ENCODE measurements at regions of chr13 and their contacts with region 1.

Region 1: DNA sequence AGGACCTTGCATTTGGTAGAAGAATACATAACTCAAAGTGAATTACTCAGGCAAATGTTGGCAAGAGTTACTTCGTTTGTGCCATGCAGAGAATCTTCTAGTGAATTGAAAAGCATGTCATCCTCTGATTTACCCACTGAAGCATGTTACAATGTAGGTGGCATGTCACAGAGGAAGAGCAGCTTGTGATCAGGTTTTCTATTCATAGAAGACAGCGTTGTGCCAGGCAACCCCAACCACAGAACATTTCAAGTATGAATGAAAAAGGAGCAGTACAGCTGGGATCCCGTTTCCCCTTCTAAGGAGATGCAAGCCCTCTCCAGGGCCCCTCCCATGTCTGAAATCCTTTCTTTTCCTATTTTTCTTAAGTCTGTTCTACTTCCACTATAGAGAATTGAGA is 6.0 kb upstream of the KATNAL1 start:
- DNase-seq: no peak
- ATAC-seq: no peak
- H3K4me3 ChIP-seq: no peak overlapping the region
- H3K4me3 Mint-ChIP-seq: no peak overlapping the region
- H3K27ac ChIP-seq: no peak overlapping the region
- H3K27ac Mint-ChIP-seq: no peak overlapping the region
- H3K4me1 ChIP-seq: no peaks in the 10 kb centered on the region
- H3K4me1 Mint-ChIP-seq: peaks cover 30% of the 10 kb centered on the region
- H3K27me3 ChIP-seq: no peaks in the 10 kb centered on the region
- H3K27me3 Mint-ChIP-seq: no peaks in the 10 kb centered on the region
- CTCF ChIP-seq: no peak

Region 2: GRCh38 chr13:30292325-30292724 is 21.0 kb before region 1 on chr13:
- CTCF ChIA-PET with region 1: no interaction called
- POLR2A ChIA-PET with region 1: no interaction called
- intact Hi-C with region 1: no loop called
- DNase-seq: no peak
- ATAC-seq: no peak
- H3K4me3 ChIP-seq: no peak overlapping the region
- H3K4me3 Mint-ChIP-seq: no peak overlapping the region
- H3K27ac ChIP-seq: no peak overlapping the region
- H3K27ac Mint-ChIP-seq: no peak overlapping the region
- H3K4me1 ChIP-seq: no peaks in the 10 kb centered on the region
- H3K4me1 Mint-ChIP-seq: peaks cover 6% of the 10 kb centered on the region
- H3K27me3 ChIP-seq: no peaks in the 10 kb centered on the region
- H3K27me3 Mint-ChIP-seq: no peaks in the 10 kb centered on the region
- CTCF ChIP-seq: no peak

Region 3: DNA sequence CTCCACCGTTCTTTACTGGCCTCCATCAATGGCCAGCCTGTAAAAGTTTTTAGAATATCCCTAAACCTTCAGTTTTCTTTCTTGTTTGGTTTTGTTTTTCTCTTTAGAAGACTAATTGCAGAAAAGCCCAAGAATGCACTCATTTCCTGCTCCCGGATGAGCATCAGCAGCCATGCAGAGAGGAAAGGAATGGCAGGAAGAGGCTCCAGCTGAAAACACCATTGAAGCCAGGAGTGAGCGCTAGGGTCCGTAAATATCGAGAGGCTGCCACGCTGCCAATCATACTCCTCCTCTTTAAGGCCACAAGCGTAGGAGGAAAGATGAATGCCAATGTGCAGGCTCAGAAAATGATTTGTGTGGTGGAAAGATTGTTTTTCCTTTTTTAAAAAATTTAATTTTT is 51.6 kb after region 1 on chr13:
- CTCF ChIA-PET with region 1: no interaction called
- POLR2A ChIA-PET with region 1: no interaction called
- intact Hi-C with region 1: loop called in 1 of 2 experiments (anchors 5 kb)
- DNase-seq: no peak
- ATAC-seq: no peak
- H3K4me3 ChIP-seq: no peak overlapping the region
- H3K4me3 Mint-ChIP-seq: no peak overlapping the region
- H3K27ac ChIP-seq: no peak overlapping the region
- H3K27ac Mint-ChIP-seq: no peak overlapping the region
- H3K4me1 ChIP-seq: peaks cover 37% of the 10 kb centered on the region
- H3K4me1 Mint-ChIP-seq: peaks cover 24% of the 10 kb centered on the region
- H3K27me3 ChIP-seq: no peaks in the 10 kb centered on the region
- H3K27me3 Mint-ChIP-seq: no peaks in the 10 kb centered on the region
- CTCF ChIP-seq: no peak

Region 4: GRCh38 chr13:30415430-30416030 is 102.2 kb after region 1 on chr13:
- CTCF ChIA-PET with region 1: no interaction called
- POLR2A ChIA-PET with region 1: no interaction called
- intact Hi-C with region 1: loop called in 1 of 2 experiments (anchors 5 kb)
- DNase-seq: peak in 1 of 14 experiments; percentile 22
- ATAC-seq: peak; percentile 63
- H3K4me3 ChIP-seq: no peak overlapping the region
- H3K4me3 Mint-ChIP-seq: no peak overlapping the region
- H3K27ac ChIP-seq: no peak overlapping the region
- H3K27ac Mint-ChIP-seq: peak overlapping the region; percentile 32
- H3K4me1 ChIP-seq: no peaks in the 10 kb centered on the region
- H3K4me1 Mint-ChIP-seq: peaks cover 32% of the 10 kb centered on the region
- H3K27me3 ChIP-seq: no peaks in the 10 kb centered on the region
- H3K27me3 Mint-ChIP-seq: no peaks in the 10 kb centered on the region
- CTCF ChIP-seq: no peak

Measured in CD4-positive, alpha-beta T cell (primary cell).